ENCODE measurements at regions of chr10 and their contacts with region 1.

Region 1: DNA sequence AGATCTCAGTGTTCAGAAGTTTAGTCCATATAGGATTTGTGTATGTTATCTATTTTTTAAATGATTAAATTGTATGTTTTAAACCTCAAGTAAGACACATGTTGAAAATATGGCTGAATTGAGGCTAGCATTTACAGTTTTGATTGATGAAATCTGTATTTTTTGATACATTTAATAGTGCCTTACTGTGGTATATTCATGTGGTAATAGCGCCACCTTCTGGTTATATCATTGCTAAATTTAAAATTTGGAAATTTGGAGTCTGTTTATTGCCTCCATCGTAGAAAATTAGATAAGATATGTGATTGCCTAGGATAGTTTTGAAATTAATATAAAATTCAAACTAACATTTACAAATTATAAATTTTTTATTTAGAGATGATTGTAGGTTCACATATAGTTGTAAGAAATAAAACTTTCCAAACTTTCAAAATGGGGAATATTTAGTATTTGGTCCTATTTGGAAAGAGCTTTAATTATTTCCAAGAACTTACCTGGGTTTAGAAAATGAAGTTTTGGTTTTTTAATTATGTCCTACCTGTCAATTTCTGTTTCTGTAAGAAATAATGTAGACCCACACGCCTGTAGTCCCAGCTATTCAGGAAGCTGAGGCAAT is 19.1 kb upstream of the ARMS2 start:
- DNase-seq: peak in 1 of 2 experiments; percentile 49
- H3K4me3 ChIP-seq: no peak overlapping the region
- H3K4me1 ChIP-seq: no peaks in the 10 kb centered on the region
- H3K27me3 ChIP-seq: no peaks in the 10 kb centered on the region

Region 2: DNA sequence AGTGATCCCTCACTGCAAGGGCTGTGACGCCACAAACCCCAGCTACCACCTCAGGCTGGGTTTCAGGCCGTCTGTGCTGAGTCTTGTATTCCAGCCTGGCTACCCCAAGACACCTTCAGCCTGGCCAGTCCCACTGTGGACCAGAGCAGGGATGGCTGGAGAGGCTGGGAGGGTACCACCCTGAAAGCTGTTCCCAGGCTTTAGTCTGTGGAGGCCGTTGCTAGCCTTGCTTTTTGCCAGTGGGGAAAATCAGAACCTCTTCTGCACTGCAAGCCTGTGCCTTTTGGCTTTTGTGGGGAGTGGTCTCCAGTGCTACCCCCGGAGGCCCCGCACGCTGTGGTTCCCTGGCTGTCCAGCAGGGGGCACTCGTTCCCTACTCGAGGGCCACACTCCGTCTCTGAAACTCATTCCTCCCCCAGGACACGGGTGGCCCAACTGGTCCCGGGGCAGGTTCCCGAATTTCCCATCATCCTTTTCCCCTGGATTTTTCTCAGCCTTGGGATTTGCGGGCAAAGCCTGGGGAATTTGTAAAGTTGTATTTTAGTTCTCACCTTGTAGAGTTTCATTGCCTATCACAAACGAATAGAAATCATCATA is 292.6 kb before region 1 on chr10:
- in situ Hi-C with region 1: loop called (anchors 25 kb)
- DNase-seq: peak in 1 of 2 experiments; percentile 77
- H3K4me3 ChIP-seq: no peak overlapping the region
- H3K4me1 ChIP-seq: 0 out of 2 replicates have a peak, but pooled peaks cover 3% of the 10 kb centered on the region
- H3K27me3 ChIP-seq: no peaks in the 10 kb centered on the region

Region 3: GRCh38 chr10:122298598-122299301 is 136.6 kb before region 1 on chr10:
- in situ Hi-C with region 1: loop called (anchors 10 kb)
- DNase-seq: peak; percentile 70 to 80
- H3K4me3 ChIP-seq: 0 out of 2 replicates have a peak overlapping the region, but pooled peaks have one; percentile 6
- H3K4me1 ChIP-seq: no peaks in the 10 kb centered on the region
- H3K27me3 ChIP-seq: no peaks in the 10 kb centered on the region

Region 4: DNA sequence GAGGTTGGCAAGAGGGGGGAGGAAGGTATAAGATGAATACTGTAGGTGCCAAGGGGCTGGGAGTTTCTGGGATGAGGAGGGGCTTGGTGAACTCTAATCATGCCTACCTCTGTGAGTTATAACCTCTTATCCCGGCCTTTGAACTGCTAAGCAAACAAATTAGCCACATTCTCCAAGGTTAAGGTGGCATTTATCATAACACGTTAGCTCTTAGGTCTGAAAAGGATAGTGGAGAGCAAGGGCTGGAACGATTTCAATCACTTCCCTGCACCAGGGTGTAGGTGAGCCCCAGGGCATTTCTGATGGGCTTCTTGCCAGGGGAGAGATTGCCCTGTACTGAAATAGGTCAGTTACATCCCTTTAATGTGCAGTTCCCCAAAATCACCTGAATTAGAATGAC is 96.6 kb after region 1 on chr10:
- in situ Hi-C with region 1: no loop called
- DNase-seq: no peak
- H3K4me3 ChIP-seq: no peak overlapping the region
- H3K4me1 ChIP-seq: no peaks in the 10 kb centered on the region
- H3K27me3 ChIP-seq: no peaks in the 10 kb centered on the region

Region 5: GRCh38 chr10:122565728-122566206 is 130.4 kb after region 1 on chr10:
- in situ Hi-C with region 1: loop called (anchors 5 kb)
- DNase-seq: peak; percentile 58 to 82
- H3K4me3 ChIP-seq: no peak overlapping the region
- H3K4me1 ChIP-seq: no peaks in the 10 kb centered on the region
- H3K27me3 ChIP-seq: peaks cover 39% of the 10 kb centered on the region

Measured in HAP-1 (cell line).